HEK293 (cell line): ENCODE measurements at regions of chr19 and their contacts with region 1.

Region 1: GRCh38 chr19:38618590-38619360 is at the start of gene EIF3K:
- H3K4me3 ChIP-seq: peak within 1 kb of the TSS; percentile 65
- H3K27ac ChIP-seq: peak within 1 kb of the TSS; percentile 94
- H3K4me1 ChIP-seq: peaks cover 16% of the 10 kb centered on the region
- CTCF ChIP-seq: no peak

Region 2: DNA sequence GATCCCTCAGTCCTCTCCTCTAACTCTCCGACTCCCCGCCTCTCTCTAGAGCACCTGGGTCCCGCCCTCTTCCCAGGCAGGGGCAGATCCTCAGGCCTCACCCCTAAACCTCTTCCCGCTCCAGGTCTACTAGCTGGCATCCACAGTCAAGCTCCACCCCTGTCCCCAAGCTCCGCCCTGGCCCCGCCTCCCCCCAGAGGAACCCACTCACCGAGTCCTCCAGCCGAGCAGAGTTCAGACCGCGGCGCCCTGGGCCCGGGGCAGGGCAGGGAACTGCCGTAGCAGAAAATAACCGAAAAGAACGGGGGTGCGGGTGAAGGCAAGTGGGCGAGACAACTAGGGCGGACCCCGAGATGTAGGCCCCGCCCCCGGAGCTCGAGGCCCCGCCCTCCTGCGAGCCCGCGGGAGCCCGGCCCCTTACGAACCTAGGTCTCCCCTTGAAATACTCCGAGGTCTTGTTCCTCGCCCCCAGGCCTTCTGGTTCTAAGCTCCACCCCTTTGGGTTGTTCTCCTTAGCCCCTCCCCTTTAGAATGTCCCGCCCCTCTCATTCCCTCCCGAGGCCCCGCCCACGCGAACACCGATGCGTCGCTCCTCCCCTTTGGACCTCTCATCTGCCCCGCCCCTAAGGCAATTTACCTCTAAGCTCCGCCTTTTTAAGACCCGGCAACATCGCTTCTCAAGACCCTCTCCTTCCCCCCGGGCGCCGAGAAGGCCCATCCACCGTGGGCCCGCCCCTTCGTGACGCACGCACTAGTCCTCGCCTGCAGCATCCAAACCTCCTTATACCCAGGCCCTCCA is 231.0 kb before region 1 on chr19 and contains the start of gene GGN:
- CTCF ChIA-PET with region 1: no interaction called
- POLR2A ChIA-PET with region 1: interaction called, 17 read pairs
- H3K4me3 ChIP-seq: peak within 1 kb of the TSS; percentile 56
- H3K27ac ChIP-seq: peak within 1 kb of the TSS; percentile 63
- H3K4me1 ChIP-seq: peaks cover 19% of the 10 kb centered on the region
- CTCF ChIP-seq: no peak

Region 3: DNA sequence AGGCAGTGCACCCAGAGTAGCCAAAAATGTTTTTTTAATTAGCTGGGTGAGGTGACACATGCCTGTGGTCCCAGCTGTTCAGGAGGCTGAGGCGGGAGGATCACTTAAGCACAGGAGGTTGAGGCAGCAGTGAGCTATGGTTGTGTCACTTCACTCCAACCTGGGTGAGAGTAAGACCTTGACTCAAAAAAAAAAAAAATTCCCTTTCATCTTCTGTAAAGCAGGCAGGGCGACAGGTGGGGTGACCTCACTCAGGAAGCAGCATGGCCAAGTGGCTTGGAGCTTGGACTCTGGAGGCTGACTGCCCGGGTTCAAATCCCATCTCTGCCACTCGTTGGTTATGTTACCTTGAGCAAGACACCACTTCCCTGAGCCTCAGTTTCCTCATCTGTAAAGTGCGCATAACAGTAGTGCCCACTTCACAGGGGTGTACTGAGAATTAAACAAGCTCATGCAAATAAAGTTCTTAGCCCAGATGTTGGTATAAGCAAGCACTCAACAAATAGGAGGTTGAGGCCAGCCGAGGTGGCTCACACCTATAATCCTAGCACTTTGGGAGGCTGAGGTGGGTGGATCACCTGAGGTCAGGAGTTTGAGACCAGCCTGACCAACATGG is 49.3 kb before region 1 on chr19:
- CTCF ChIA-PET with region 1: interaction called, 3 read pairs
- POLR2A ChIA-PET with region 1: interaction called, 11 read pairs
- H3K4me3 ChIP-seq: no peak overlapping the region
- H3K27ac ChIP-seq: no peak overlapping the region
- H3K4me1 ChIP-seq: no peaks in the 10 kb centered on the region; the same call in 1 of the 2 replicates
- CTCF ChIP-seq: no peak

Region 4: GRCh38 chr19:38606131-38606530 is 12.6 kb before region 1 on chr19:
- CTCF ChIA-PET with region 1: interaction called, 3 read pairs
- POLR2A ChIA-PET with region 1: interaction called, 31 read pairs
- H3K4me3 ChIP-seq: no peak overlapping the region
- H3K27ac ChIP-seq: no peak overlapping the region
- H3K4me1 ChIP-seq: no peaks in the 10 kb centered on the region
- CTCF ChIP-seq: no peak

Region 5: DNA sequence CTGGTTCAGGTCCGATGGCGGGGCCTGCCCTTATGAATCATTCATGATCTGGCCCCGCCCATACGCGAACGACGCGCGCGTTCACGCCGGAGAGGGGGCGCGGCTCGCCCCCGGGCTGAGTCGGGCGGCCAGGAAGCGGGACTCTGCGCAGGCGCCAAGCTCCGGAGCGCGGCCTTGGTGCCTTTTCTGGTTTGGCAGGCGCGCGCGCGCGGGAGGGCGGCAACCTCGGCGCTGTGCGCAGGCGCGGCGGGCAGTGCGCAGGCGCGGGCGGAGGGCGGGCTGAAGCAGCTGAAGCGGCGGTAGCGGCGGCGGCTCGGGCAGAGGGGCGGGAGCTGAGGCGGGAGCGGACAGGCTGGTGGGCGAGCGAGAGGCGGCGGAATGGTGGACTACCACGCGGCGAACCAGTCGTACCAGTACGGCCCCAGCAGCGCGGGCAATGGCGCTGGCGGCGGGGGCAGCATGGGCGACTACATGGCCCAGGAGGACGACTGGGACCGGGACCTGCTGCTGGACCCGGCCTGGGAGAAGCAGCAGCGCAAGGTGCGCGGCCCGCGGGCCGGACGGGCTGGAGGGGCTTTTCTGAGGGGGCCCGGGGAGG is 28.7 kb after region 1 on chr19 and contains the start of gene ACTN4:
- CTCF ChIA-PET with region 1: interaction called, 5 read pairs
- POLR2A ChIA-PET with region 1: interaction called, 54 read pairs
- H3K4me3 ChIP-seq: peak within 1 kb of the TSS; percentile 84
- H3K27ac ChIP-seq: peak within 1 kb of the TSS; percentile 96
- H3K4me1 ChIP-seq: peaks cover 37% of the 10 kb centered on the region
- CTCF ChIP-seq: peak; percentile 52; the same call in 1 of the 2 replicates

Region 6: GRCh38 chr19:38683393-38684080 is 64.8 kb after region 1 on chr19:
- CTCF ChIA-PET with region 1: no interaction called
- POLR2A ChIA-PET with region 1: interaction called, 16 read pairs
- H3K4me3 ChIP-seq: no peak overlapping the region
- H3K27ac ChIP-seq: peak overlapping the region; percentile 98
- H3K4me1 ChIP-seq: peaks cover 41% of the 10 kb centered on the region
- CTCF ChIP-seq: no peak